ENCODE measurements at regions of chr5 and their contacts with region 1.

Region 1: GRCh38 chr5:179559284-179560252 is 9.2 kb downstream of the RUFY1 start:
- DNase-seq: peak; percentile 100
- H3K4me3 Mint-ChIP-seq: peak overlapping the region; percentile 98
- H3K27ac Mint-ChIP-seq: peak overlapping the region; percentile 98
- H3K4me1 Mint-ChIP-seq: peaks cover 19% of the 10 kb centered on the region
- H3K27me3 Mint-ChIP-seq: no peaks in the 10 kb centered on the region
- CTCF ChIP-seq: no peak

Region 2: DNA sequence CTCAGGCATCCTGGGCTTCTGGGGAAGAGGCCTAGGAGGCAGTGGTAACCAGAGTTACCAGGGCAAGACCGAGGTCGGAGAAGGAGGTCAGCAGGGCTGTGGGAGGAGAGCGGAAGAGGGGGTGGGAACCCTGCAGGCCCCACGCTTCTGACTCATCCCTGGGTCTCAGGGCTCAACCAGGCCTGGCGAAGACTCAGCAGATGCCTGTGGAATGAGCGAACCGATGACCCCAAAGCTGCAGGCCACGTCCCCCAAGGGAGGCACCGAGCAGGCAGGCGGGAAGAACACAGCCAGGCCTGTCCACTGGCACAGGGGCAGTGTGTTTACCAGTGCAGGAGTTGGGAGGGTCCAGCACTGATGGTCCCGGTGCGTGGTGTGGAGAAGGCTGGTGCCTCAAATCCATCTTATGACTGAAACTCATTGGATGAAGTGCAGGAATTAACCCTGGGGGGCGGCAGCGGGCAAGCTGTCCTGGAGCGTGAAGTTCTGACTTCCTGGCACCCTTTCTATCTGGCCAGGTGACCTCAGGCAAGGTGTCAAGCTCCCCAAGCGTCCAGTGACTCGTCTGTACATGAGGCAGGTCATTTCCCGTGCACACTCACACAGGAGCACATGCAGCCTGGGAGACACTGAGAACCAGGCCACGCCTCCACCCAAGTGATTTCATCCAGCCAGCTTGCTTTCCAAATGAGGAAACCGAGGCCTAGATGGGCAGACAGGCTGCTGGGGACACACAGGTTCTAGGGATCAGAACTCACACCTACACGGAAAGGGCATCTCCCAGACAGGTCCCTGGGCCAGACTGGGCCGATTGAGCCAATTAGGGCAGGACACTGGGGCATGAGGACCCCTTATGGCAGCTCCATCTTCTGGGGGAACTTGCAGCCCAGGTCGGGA is 283.4 kb before region 1 on chr5:
- CTCF ChIA-PET with region 1: no interaction called
- POLR2A ChIA-PET with region 1: no interaction called
- intact Hi-C with region 1: no loop called
- DNase-seq: peak; percentile 72
- H3K4me3 Mint-ChIP-seq: no peak overlapping the region
- H3K27ac Mint-ChIP-seq: peak overlapping the region; percentile 47
- H3K4me1 Mint-ChIP-seq: peaks cover 7% of the 10 kb centered on the region
- H3K27me3 Mint-ChIP-seq: no peaks in the 10 kb centered on the region
- CTCF ChIP-seq: no peak

Region 3: DNA sequence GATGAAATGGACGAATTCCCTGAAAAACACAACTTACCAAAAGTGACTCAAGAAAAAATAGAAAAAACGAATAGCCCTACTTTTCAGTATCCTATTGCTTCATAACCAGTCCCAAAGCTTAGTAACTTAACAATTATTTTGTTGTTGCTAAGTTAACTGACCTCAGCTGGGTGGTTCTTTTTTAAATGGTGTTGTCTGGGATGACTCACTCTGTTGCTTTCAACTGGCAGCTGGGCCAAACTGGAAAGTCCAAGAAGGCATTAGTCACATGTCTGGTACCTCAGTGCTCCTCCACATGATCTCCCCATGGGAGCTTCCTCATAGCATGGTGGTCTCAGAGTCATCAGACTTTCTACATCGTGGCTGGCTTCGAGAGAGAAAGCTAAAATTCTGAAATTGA is 166.5 kb before region 1 on chr5:
- CTCF ChIA-PET with region 1: no interaction called
- POLR2A ChIA-PET with region 1: interaction called, 3 read pairs
- intact Hi-C with region 1: loop called (anchors 2 kb)
- DNase-seq: peak; percentile 88
- H3K4me3 Mint-ChIP-seq: peak overlapping the region; percentile 39
- H3K27ac Mint-ChIP-seq: peak overlapping the region; percentile 95
- H3K4me1 Mint-ChIP-seq: peaks cover 14% of the 10 kb centered on the region
- H3K27me3 Mint-ChIP-seq: no peaks in the 10 kb centered on the region
- CTCF ChIP-seq: no peak

Region 4: DNA sequence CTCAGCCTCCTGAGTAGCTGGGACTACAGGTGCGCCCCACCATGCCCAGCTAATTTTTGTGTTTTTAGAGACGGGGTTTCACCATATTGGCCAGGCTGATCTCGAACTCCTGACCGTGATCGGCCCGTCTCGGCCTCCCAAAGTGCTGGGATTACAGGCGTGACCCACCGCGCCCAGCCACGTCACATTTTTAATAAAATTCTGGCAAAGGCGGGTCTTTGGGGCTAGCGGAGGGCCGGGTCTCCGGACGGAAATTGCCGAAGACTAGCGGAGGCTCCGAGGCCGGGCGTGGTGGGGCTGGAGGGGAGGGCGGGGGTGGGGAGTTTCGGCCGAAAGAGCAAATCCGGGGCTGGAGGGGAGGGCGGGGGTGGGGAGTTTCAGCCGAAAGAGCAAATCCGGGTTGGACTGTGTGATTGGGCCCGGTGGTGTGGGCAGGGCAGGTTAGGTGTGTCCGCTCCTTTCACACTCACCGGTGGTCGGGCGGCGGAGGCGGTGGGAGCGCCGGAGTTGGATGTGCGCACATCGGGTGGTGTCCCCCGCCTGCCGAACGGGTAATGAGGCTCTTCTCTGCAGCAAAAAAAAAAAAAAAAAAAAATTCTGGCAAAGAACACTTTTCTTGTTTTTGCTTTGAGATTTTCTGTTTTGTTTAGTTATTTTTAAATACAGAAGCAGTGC is 17.9 kb after region 1 on chr5:
- CTCF ChIA-PET with region 1: no interaction called
- POLR2A ChIA-PET with region 1: interaction called, 25 read pairs
- intact Hi-C with region 1: no loop called
- DNase-seq: no peak
- H3K4me3 Mint-ChIP-seq: no peak overlapping the region
- H3K27ac Mint-ChIP-seq: no peak overlapping the region
- H3K4me1 Mint-ChIP-seq: no peaks in the 10 kb centered on the region
- H3K27me3 Mint-ChIP-seq: no peaks in the 10 kb centered on the region
- CTCF ChIP-seq: no peak

Region 5: DNA sequence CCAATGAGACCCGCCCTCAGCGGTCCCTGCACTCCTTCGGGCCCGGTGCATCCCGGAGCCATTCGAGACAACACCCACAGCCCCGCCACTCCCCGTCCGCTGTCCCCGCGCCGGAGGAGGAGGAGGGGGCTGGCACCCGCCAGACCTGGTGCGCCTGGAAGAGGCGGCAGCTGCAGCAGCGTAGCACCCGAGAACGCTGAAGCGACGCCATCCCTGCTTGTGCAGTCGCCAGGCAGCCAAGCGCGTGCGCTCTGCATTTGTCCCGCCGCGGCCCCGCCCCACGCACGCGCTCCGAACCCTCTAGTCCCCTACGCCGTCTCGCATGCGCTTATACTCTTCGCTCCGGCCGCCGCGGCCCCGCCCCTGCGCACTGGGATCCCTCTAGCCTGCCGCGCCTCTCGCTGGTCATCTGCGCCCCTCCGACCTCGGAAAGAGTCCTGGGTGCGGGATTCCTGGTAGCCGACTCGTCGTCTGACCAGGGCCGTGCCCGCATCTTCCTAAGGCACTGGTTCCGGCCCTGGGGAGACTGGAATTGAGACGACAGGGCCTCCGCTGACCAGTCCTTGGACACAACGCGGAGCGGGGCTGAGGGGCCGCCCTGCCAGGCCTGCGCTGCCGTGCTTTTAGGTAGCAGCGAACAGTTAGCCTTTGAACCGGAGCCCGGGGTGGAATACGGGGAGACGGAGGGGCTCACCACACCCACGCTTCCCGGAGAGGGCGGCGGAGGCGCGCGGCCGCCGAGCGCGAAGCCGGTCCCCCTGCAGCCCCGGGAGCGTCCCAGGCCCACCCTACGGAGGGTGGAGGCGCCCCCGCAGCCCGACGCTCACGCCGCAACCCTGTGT is 299.2 kb after region 1 on chr5 and contains the start of gene MRNIP:
- CTCF ChIA-PET with region 1: no interaction called
- POLR2A ChIA-PET with region 1: no interaction called
- intact Hi-C with region 1: no loop called
- DNase-seq: peak; percentile 98
- H3K4me3 Mint-ChIP-seq: peak within 1 kb of the TSS; percentile 94
- H3K27ac Mint-ChIP-seq: peak within 1 kb of the TSS; percentile 83
- H3K4me1 Mint-ChIP-seq: peaks cover 11% of the 10 kb centered on the region
- H3K27me3 Mint-ChIP-seq: no peaks in the 10 kb centered on the region
- CTCF ChIP-seq: no peak
- total RNA-seq, gene MRNIP: 40.3 and 42.8 TPM in 2 replicates